Activated T-helper 2 cell treated with anti-CD3 and anti-CD28 coated beads, Interferon-gamma antibody, Interleukin-2, Interleukin-4, amounts not matched to agents 10 μg/mL and 5 μg/mL and 100 μg/mL, durations not matched to agents 14 hours and 24 hours and 36 hours (primary cell): ENCODE measurements at regions of chr1 and their contacts with region 1.

Region 1: DNA sequence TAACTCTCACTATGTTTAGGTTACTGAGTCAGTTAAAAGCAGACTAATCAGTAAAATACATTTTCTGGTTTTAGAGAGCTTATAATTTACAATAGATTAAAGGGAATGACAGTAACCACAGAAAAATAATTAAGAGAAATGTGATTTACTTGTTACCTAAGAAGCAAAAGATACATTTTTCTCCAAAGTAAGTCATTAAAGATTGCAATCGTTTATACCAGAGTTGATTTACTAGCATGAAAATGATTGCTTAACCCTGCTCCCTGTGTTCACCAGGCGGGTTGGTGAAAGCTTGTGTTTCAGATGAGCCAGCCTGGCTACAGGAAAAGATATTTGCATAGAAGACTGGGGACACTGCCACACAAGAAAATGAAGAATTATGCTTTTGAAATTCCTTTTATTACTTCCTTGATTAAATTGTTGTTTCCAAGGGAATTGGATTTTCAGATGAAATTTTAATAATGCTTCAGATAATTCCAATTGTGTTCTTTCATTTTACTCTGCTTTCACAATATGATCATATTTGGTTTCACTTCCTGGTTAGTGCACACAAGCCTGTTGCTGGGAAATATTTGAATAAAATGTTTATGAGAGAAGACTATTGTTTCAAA is 27.9 kb downstream of the LRRC8B start:
- DNase-seq: no peak
- H3K4me3 Mint-ChIP-seq: peak overlapping the region; percentile 38
- H3K27ac Mint-ChIP-seq: peak overlapping the region; percentile 74
- H3K4me1 Mint-ChIP-seq: peaks cover 77% of the 10 kb centered on the region
- H3K27me3 Mint-ChIP-seq: no peaks in the 10 kb centered on the region

Region 2: DNA sequence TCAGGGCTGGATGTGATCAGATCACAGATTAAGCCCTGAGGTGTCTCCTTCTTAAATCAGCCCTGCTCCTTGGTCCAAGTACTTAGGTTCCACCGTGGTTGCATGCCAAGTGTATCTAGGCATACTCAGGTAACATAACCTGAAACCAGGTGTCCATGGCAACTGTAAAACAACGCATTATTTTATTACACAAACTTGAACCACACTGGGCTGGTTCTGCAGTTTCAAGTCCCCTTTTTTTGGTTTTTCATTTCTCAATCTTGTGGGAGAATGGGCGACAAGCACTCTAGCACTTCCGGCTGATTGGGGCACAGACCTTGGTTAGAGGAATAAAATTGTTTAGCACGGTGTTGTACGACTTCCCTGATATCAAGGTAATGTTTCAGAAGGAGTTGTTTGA is 123.5 kb before region 1 on chr1:
- intact Hi-C with region 1: no loop called
- DNase-seq: no peak
- H3K4me3 Mint-ChIP-seq: no peak overlapping the region
- H3K27ac Mint-ChIP-seq: no peak overlapping the region
- H3K4me1 Mint-ChIP-seq: peaks cover 4% of the 10 kb centered on the region
- H3K27me3 Mint-ChIP-seq: peaks cover 13% of the 10 kb centered on the region

Region 3: GRCh38 chr1:89499320-89499719 is 53.3 kb before region 1 on chr1:
- intact Hi-C with region 1: no loop called
- DNase-seq: no peak
- H3K4me3 Mint-ChIP-seq: no peak overlapping the region
- H3K27ac Mint-ChIP-seq: no peak overlapping the region
- H3K4me1 Mint-ChIP-seq: no peaks in the 10 kb centered on the region
- H3K27me3 Mint-ChIP-seq: peaks cover 29% of the 10 kb centered on the region

Region 4: GRCh38 chr1:89538361-89538760 is 14.2 kb before region 1 on chr1:
- intact Hi-C with region 1: loop called (anchors 2 kb)
- DNase-seq: no peak
- H3K4me3 Mint-ChIP-seq: no peak overlapping the region
- H3K27ac Mint-ChIP-seq: peak overlapping the region; percentile 79
- H3K4me1 Mint-ChIP-seq: peaks cover 66% of the 10 kb centered on the region
- H3K27me3 Mint-ChIP-seq: no peaks in the 10 kb centered on the region

Region 5: GRCh38 chr1:89589515-89589914 is 36.9 kb after region 1 on chr1:
- intact Hi-C with region 1: loop called (anchors 2 kb)
- DNase-seq: no peak
- H3K4me3 Mint-ChIP-seq: no peak overlapping the region
- H3K27ac Mint-ChIP-seq: peak overlapping the region; percentile 80
- H3K4me1 Mint-ChIP-seq: peaks cover 74% of the 10 kb centered on the region
- H3K27me3 Mint-ChIP-seq: no peaks in the 10 kb centered on the region

Region 6: DNA sequence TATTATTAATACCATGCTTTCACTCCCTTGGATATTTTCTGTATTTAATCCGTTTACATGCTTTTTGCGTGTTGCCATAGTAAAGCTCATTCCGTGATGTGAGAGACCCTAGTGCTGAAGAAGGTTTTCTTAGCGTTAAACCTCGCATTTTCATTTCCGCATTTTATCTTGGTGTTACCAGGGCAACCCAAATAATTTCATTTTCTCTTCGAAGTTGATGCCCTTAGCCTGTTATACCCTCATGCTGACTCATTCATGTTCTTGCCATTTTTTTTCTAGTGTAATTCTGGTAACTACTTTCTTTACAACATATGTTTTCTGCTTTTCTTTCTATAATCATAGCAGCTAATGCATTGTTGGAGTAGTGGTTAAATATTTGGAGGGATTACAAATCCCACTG is 117.6 kb after region 1 on chr1:
- intact Hi-C with region 1: no loop called
- DNase-seq: no peak
- H3K4me3 Mint-ChIP-seq: peak overlapping the region; percentile 44
- H3K27ac Mint-ChIP-seq: peak overlapping the region; percentile 83
- H3K4me1 Mint-ChIP-seq: peaks cover 85% of the 10 kb centered on the region
- H3K27me3 Mint-ChIP-seq: no peaks in the 10 kb centered on the region

Region 7: GRCh38 chr1:90291431-90292216 is 739.0 kb after region 1 on chr1:
- intact Hi-C with region 1: no loop called
- DNase-seq: no peak
- H3K4me3 Mint-ChIP-seq: no peak overlapping the region
- H3K27ac Mint-ChIP-seq: no peak overlapping the region
- H3K4me1 Mint-ChIP-seq: no peaks in the 10 kb centered on the region
- H3K27me3 Mint-ChIP-seq: no peaks in the 10 kb centered on the region